PC-3 (cell line): ENCODE measurements at regions of chr6 and their contacts with region 1.

Region 1: DNA sequence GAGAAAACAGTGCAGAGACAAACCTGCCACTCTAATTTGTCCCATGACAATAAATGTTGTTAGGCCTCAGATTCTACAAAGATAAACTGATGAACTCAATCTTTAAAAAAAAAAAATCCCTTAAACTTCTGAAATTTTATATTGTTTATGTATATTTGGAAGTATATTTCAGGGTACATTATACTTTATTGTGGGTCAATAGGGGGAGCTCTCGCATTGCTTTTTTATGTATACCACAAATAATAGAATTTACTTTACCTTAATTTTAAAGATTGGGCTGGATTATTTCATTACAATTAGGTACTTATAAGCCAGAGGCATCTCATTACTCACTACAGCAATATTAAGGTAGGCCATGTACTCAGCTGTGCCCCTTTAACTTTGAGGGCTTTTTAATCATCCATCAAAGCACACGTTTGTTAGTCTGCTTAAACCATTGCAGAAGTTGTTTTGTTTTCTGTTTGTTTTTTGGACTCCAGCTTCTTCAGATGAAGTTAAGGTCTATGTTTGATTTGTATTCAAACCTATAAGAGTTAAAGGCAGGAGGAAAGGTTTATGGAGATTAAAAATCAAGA is 56.3 kb upstream of the EYA4 start:
- DNase-seq: peak; percentile 57
- ATAC-seq: 0 out of 2 replicates have a peak, but pooled peaks have one; percentile 20
- H3K4me3 ChIP-seq: no peak overlapping the region
- H3K27ac ChIP-seq: no peak overlapping the region
- H3K4me1 ChIP-seq: peaks cover 4% of the 10 kb centered on the region
- H3K27me3 ChIP-seq: no peaks in the 10 kb centered on the region
- CTCF ChIP-seq: peak; percentile 71

Region 2: GRCh38 chr6:132414761-132415160 is 770.1 kb before region 1 on chr6:
- CTCF ChIA-PET with region 1: no interaction called
- POLR2A ChIA-PET with region 1: no interaction called
- intact Hi-C with region 1: no loop called
- DNase-seq: no peak
- ATAC-seq: no peak
- H3K4me3 ChIP-seq: no peak overlapping the region
- H3K27ac ChIP-seq: no peak overlapping the region
- H3K4me1 ChIP-seq: no peaks in the 10 kb centered on the region
- H3K27me3 ChIP-seq: no peaks in the 10 kb centered on the region
- CTCF ChIP-seq: no peak

Region 3: DNA sequence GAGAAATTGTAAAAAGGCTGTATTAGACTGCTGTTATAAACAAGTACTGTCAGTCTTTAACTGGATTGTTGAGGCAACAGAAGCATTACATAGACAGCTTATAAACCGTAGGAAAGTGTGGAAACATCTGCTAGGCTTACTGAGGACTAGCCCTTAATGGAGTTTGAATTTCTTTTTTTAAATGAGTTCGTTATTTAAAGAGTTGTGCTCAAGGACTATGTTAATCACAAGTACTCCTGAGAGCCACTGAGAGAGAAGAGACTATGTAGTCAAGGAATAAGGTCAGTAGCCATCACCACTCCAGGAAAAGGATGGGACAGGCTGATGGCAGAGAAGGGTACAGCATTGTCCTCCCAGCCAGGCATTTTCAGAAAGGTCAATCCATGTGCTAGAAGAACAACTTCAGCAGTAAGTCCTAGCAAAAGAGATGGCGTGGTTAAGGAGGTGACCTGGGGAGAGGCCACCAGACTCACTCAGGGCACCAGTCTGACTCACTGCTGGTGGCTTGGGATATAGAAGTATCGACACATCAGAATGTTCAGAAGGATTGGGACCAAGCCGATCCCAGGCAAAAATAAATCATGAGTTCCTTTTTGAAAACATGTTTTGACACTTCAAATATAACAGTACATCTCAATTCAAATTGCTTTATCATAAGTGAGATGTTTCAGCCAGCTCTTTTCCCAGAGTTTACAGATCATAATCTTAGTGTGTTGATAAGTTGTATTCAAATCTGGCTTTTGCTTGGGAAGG is 364.1 kb before region 1 on chr6:
- CTCF ChIA-PET with region 1: no interaction called
- POLR2A ChIA-PET with region 1: no interaction called
- intact Hi-C with region 1: loop called (anchors 5 kb)
- DNase-seq: peak; percentile 33
- ATAC-seq: peak; percentile 44
- H3K4me3 ChIP-seq: no peak overlapping the region
- H3K27ac ChIP-seq: no peak overlapping the region
- H3K4me1 ChIP-seq: peaks cover 16% of the 10 kb centered on the region
- H3K27me3 ChIP-seq: no peaks in the 10 kb centered on the region
- CTCF ChIP-seq: no peak

Region 4: GRCh38 chr6:133130863-133131262 is 54.0 kb before region 1 on chr6:
- CTCF ChIA-PET with region 1: no interaction called
- POLR2A ChIA-PET with region 1: no interaction called
- intact Hi-C with region 1: loop called (anchors 5 kb)
- DNase-seq: peak; percentile 95
- ATAC-seq: peak; percentile 98
- H3K4me3 ChIP-seq: no peak overlapping the region
- H3K27ac ChIP-seq: peak overlapping the region; percentile 69
- H3K4me1 ChIP-seq: peaks cover 27% of the 10 kb centered on the region
- H3K27me3 ChIP-seq: no peaks in the 10 kb centered on the region
- CTCF ChIP-seq: peak; percentile 41; the same call in 1 of the 2 replicates

Region 5: DNA sequence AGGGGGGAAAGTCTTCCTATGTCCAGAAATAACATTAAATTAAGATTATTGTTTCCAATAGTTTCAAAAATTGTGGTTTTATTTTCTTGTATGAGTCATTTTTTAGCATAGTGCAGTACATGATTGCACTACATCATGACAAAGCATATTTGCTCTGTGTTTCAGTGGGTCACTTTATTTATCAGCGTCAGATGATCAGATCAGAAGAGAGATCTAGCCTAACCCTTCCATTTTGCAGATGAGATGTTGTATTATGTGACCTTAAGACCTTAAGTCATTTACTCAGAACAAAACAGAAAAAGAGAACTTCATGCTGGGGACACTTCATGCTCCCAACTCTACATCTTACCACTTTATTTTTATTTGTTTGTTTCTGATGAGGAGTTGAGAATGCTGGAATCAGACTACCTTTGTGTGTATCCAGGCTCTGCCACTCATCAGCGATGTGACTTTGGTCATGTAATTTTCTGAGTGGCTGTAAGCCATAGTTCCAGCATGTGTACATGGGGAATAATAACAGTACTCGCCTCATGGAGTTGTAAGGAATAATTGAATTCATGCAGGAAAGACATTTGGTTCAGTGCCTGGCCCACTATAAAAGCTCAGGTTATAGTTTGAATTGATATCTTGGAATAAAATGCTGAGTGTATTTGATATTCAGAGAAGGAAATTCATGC is 69.8 kb after region 1 on chr6:
- CTCF ChIA-PET with region 1: no interaction called
- POLR2A ChIA-PET with region 1: no interaction called
- intact Hi-C with region 1: no loop called
- DNase-seq: peak; percentile 57
- ATAC-seq: peak; percentile 90
- H3K4me3 ChIP-seq: no peak overlapping the region
- H3K27ac ChIP-seq: peak overlapping the region; percentile 79
- H3K4me1 ChIP-seq: peaks cover 36% of the 10 kb centered on the region
- H3K27me3 ChIP-seq: no peaks in the 10 kb centered on the region
- CTCF ChIP-seq: no peak

Region 6: DNA sequence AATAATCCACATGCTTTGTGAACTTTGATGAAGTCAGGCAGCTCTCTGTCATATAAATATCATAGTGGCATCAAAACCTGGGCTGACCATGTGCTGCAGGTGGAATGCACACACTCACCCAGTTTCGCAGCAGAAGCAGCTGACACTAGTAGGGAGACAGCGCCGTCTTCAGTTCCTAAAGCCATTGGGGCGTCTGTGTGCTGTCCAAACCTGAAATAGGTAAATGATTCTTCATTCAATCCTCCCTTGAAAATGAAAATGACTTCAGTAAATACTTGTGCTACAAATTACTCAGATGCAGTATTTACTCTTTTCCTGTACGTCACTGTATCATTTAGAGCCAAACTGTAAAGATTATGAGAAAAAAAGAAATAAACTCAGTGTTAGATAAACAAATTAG is 183.8 kb after region 1 on chr6:
- CTCF ChIA-PET with region 1: no interaction called
- POLR2A ChIA-PET with region 1: no interaction called
- intact Hi-C with region 1: loop called (anchors 2 kb)
- DNase-seq: peak; percentile 51
- ATAC-seq: peak; percentile 74
- H3K4me3 ChIP-seq: no peak overlapping the region
- H3K27ac ChIP-seq: no peak overlapping the region
- H3K4me1 ChIP-seq: 0 out of 2 replicates have a peak, but pooled peaks cover 4% of the 10 kb centered on the region
- H3K27me3 ChIP-seq: no peaks in the 10 kb centered on the region
- CTCF ChIP-seq: peak; percentile 56

Region 7: DNA sequence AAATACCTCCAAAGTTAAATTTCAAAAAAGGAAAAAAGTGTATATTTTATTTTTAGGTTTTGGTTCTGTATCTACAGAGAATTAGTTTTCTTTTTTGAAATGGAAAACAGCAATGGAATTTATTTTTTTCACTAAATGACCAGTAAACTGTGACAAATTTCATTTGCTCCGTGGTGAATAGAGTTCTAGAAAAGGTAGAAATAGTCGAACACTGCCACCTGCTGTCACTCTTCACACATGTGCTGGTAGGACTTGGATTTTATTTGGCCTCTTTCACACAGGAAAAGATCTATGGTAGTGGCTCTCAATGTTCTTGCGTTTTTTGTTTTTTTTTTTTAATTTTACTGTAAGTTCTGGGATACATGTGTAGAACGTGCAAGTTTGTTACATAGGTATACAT is 368.8 kb after region 1 on chr6:
- CTCF ChIA-PET with region 1: no interaction called
- POLR2A ChIA-PET with region 1: no interaction called
- intact Hi-C with region 1: loop called (anchors 5 kb)
- DNase-seq: peak; percentile 66
- ATAC-seq: peak; percentile 64
- H3K4me3 ChIP-seq: no peak overlapping the region
- H3K27ac ChIP-seq: no peak overlapping the region
- H3K4me1 ChIP-seq: peaks cover 11% of the 10 kb centered on the region
- H3K27me3 ChIP-seq: no peaks in the 10 kb centered on the region
- CTCF ChIP-seq: peak; percentile 66